Common myeloid progenitor, CD34-positive (primary cell): ENCODE measurements at regions of chr10 and their contacts with region 1.

Region 1: GRCh38 chr10:129030996-129031843 is 435.8 kb upstream of the MGMT start:
- DNase-seq: peak; percentile 61 to 77 (median 74)
- H3K4me3 ChIP-seq: no peak overlapping the region
- H3K27ac ChIP-seq: no peak overlapping the region
- H3K4me1 ChIP-seq: peaks cover 24 to 50% (median 49%) of the 10 kb centered on the region in 4 experiments
- H3K27me3 ChIP-seq: no peaks in the 10 kb centered on the region

Region 2: GRCh38 chr10:128981881-128982615 is 49.2 kb before region 1 on chr10:
- CTCF ChIA-PET with region 1: no interaction called
- POLR2A ChIA-PET with region 1: no interaction called
- DNase-seq: no peak
- H3K4me3 ChIP-seq: no peak overlapping the region
- H3K27ac ChIP-seq: no peak overlapping the region
- H3K4me1 ChIP-seq: no peaks in the 10 kb centered on the region
- H3K27me3 ChIP-seq: peaks cover 0 to 8% (median 0%) of the 10 kb centered on the region in 5 experiments

Region 3: GRCh38 chr10:129057856-129058663 is 26.8 kb after region 1 on chr10:
- CTCF ChIA-PET with region 1: interaction called, 14 read pairs
- POLR2A ChIA-PET with region 1: interaction called, 6 read pairs
- DNase-seq: peak; percentile 72 to 97 (median 96)
- H3K4me3 ChIP-seq: peak overlapping the region in 1 of 7 experiments; percentile 5
- H3K27ac ChIP-seq: no peak overlapping the region
- H3K4me1 ChIP-seq: peaks cover 2 to 29% (median 25%) of the 10 kb centered on the region in 4 experiments
- H3K27me3 ChIP-seq: no peaks in the 10 kb centered on the region

Region 4: GRCh38 chr10:129078346-129078745 is 47.1 kb after region 1 on chr10:
- CTCF ChIA-PET with region 1: no interaction called
- POLR2A ChIA-PET with region 1: no interaction called
- DNase-seq: no peak
- H3K4me3 ChIP-seq: no peak overlapping the region
- H3K27ac ChIP-seq: no peak overlapping the region
- H3K4me1 ChIP-seq: no peaks in the 10 kb centered on the region
- H3K27me3 ChIP-seq: no peaks in the 10 kb centered on the region

Region 5: DNA sequence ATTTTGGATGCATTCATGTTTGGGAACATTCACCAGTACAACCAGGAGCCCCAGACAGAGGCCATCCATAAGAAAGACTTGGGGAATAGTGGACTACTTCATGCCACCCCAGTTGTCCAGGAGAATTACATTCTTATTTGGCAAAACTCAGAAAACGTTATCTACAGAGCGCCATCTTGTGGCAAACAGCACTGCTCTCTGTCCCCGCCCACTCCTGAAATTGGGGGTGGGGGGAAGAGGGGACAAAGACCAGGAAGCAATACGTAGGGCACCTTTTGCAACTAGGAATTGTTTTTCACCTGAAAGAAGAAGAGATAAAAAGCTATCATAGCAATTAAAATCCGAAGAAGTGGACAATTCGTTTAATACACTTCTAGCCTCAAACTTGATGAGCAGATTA is 301.3 kb after region 1 on chr10:
- CTCF ChIA-PET with region 1: interaction called, 82 read pairs
- POLR2A ChIA-PET with region 1: interaction called, 4 read pairs
- DNase-seq: peak; percentile 66 to 69 (median 67)
- H3K4me3 ChIP-seq: peak overlapping the region in 1 of 7 experiments; percentile 22
- H3K27ac ChIP-seq: no peak overlapping the region
- H3K4me1 ChIP-seq: peaks cover 2 to 53% (median 34%) of the 10 kb centered on the region in 4 experiments
- H3K27me3 ChIP-seq: no peaks in the 10 kb centered on the region

Region 6: GRCh38 chr10:129971381-129972144 is 940.3 kb after region 1 on chr10:
- CTCF ChIA-PET with region 1: interaction called, 23 read pairs
- POLR2A ChIA-PET with region 1: no interaction called
- DNase-seq: peak; percentile 68 to 84 (median 78)
- H3K4me3 ChIP-seq: peak overlapping the region in 4 of 7 experiments; percentile 32 to 58 (median 52)
- H3K27ac ChIP-seq: no peak overlapping the region
- H3K4me1 ChIP-seq: peaks cover 4 to 42% (median 39%) of the 10 kb centered on the region in 4 experiments
- H3K27me3 ChIP-seq: peaks cover 19 to 97% (median 60%) of the 10 kb centered on the region in 5 experiments